GM13977 (cell line): ENCODE measurements at regions of chr1 and their contacts with region 1.

Region 1: GRCh38 chr1:248627971-248628844 is 6.7 kb downstream of the OR2T11 start:
- DNase-seq: peak; percentile 60
- CTCF ChIP-seq: no peak

Region 2: GRCh38 chr1:248681651-248682050 is 53.4 kb after region 1 on chr1:
- in situ Hi-C with region 1: loop called (anchors 5 kb)
- DNase-seq: no peak
- CTCF ChIP-seq: no peak